ENCODE measurements at regions of chr11 and their contacts with region 1.

Region 1: GRCh38 chr11:62025487-62026105 is 58.2 kb upstream of the FTH1 start:
- DNase-seq: peak; percentile 86 to 95
- ATAC-seq: peak; percentile 94 to 98
- H3K4me3 ChIP-seq: peak overlapping the region; percentile 11; the same call in 2 of the 3 replicates
- H3K27ac ChIP-seq: peak overlapping the region; percentile 65 to 83
- H3K4me1 ChIP-seq: peaks cover 20% of the 10 kb centered on the region
- CTCF ChIP-seq: no peak
- EP300 ChIP-seq: peak; percentile 84 to 89; a peak in 3 of 5 replicates
- POLR2A ChIP-seq: no peak
- RAD21 ChIP-seq: peak; percentile 1 to 53; a peak in 3 of 5 replicates

Region 2: GRCh38 chr11:62054484-62055121 is 29.0 kb after region 1 on chr11:
- CTCF ChIA-PET with region 1: interaction called, 10 read pairs
- POLR2A ChIA-PET with region 1: no interaction called
- DNase-seq: peak; percentile 53 to 92
- ATAC-seq: peak; percentile 94 to 99
- H3K4me3 ChIP-seq: no peak overlapping the region
- H3K27ac ChIP-seq: peak overlapping the region; percentile 79 to 87
- H3K4me1 ChIP-seq: peaks cover 16% of the 10 kb centered on the region
- CTCF ChIP-seq: peak; percentile 91
- EP300 ChIP-seq: no peak
- POLR2A ChIP-seq: no peak
- RAD21 ChIP-seq: peak; percentile 97 to 98

Measured in A549 (cell line).